SK-N-SH (cell line): ENCODE measurements at regions of chr3 and their contacts with region 1.

Region 1: DNA sequence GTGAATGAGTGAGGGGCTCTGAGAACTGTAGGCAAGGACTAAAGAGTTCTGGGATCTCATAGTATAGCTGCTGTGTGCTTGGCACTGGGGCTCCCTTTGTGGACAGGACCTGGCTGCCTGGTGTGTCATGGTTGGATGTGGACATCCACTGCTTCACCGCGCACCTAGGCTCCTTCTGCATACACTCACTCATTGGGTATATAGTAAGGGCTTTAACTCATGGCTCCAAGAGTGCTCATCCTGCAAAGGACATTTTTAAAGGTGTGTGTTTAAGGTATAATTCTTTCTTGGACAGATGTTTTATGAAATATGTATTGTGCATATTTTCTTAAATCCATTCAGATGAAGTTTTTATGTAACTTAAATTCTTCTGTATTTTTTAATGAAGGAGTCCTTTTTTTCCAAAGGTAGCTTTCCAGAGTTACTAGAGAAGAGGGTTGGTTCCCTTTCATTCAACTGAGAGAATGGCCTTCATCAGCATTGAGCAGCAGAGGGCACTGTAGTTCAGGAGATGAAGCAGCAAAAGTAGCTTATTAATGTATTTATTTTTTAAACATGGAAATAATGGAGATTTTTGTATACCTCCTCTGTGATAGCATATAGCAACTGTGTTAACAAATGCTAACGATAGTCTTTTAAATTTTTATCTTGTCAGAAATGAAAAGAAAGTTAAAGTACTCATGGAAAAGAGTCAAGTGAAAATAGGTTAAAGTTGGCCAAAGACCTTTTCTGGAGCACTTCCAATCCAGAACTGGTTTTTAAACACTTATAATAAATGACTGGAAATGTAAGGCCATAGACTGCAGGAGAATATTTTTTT is 25.2 kb downstream of the OXNAD1 start:
- DNase-seq: peak; percentile 30
- H3K4me3 ChIP-seq: peak overlapping the region in 1 of 2 experiments; percentile 33; a peak in 1 of 4 replicates
- H3K27ac ChIP-seq: peak overlapping the region in 1 of 2 experiments; percentile 76; a peak in 2 of 4 replicates
- H3K4me1 ChIP-seq: peaks cover 0 to 11% of the 10 kb centered on the region in 2 experiments; a peak in 2 of 4 replicates
- H3K27me3 ChIP-seq: no peaks in the 10 kb centered on the region
- CTCF ChIP-seq: peak; percentile 96
- EP300 ChIP-seq: no peak
- RAD21 ChIP-seq: peak; percentile 97

Region 2: GRCh38 chr3:16264708-16265454 is 25.3 kb before region 1 on chr3 and contains the starts of genes DPH3 and OXNAD1:
- CTCF ChIA-PET with region 1: interaction called, 27 read pairs
- POLR2A ChIA-PET with region 1: interaction called, 3 read pairs
- DNase-seq: peak; percentile 93
- H3K4me3 ChIP-seq: peak within 1 kb of the TSS; percentile 83 to 86
- H3K27ac ChIP-seq: peak within 1 kb of the TSS; percentile 83 to 86
- H3K4me1 ChIP-seq: peaks cover 5 to 17% of the 10 kb centered on the region in 2 experiments
- H3K27me3 ChIP-seq: no peaks in the 10 kb centered on the region
- CTCF ChIP-seq: no peak
- EP300 ChIP-seq: no peak
- RAD21 ChIP-seq: no peak
- polyA plus RNA-seq, gene DPH3: 8.5 and 10.8 TPM in 2 replicates
- polyA plus RNA-seq, gene OXNAD1: 6.9 and 10.0 TPM in 2 replicates

Region 3: GRCh38 chr3:16305111-16305541 is 14.9 kb after region 1 on chr3:
- CTCF ChIA-PET with region 1: interaction called, 33 read pairs
- POLR2A ChIA-PET with region 1: no interaction called
- DNase-seq: no peak
- H3K4me3 ChIP-seq: no peak overlapping the region
- H3K27ac ChIP-seq: peak overlapping the region in 1 of 2 experiments; percentile 28; a peak in 1 of 4 replicates
- H3K4me1 ChIP-seq: peaks cover 0 to 9% of the 10 kb centered on the region in 2 experiments; a peak in 1 of 4 replicates
- H3K27me3 ChIP-seq: no peaks in the 10 kb centered on the region
- CTCF ChIP-seq: no peak
- EP300 ChIP-seq: no peak
- RAD21 ChIP-seq: no peak

Region 4: GRCh38 chr3:16489326-16490277 is 199.4 kb after region 1 on chr3:
- CTCF ChIA-PET with region 1: interaction called, 11 read pairs
- POLR2A ChIA-PET with region 1: no interaction called
- DNase-seq: peak; percentile 33
- H3K4me3 ChIP-seq: no peak overlapping the region
- H3K27ac ChIP-seq: peak overlapping the region in 1 of 2 experiments; percentile 78; a peak in 2 of 4 replicates
- H3K4me1 ChIP-seq: peaks cover 4 to 28% of the 10 kb centered on the region in 2 experiments; a peak in 3 of 4 replicates
- H3K27me3 ChIP-seq: no peaks in the 10 kb centered on the region
- CTCF ChIP-seq: no peak
- EP300 ChIP-seq: peak in 1 of 2 experiments; percentile 63; a peak in 1 of 4 replicates
- RAD21 ChIP-seq: no peak; the same call in 1 of the 2 replicates

Region 5: GRCh38 chr3:16511681-16512434 is 221.6 kb after region 1 on chr3:
- CTCF ChIA-PET with region 1: interaction called, 57 read pairs
- POLR2A ChIA-PET with region 1: interaction called, 16 read pairs
- DNase-seq: no peak
- H3K4me3 ChIP-seq: peak overlapping the region; percentile 86 to 96
- H3K27ac ChIP-seq: peak overlapping the region; percentile 67 to 100
- H3K4me1 ChIP-seq: peaks cover 9 to 58% of the 10 kb centered on the region in 2 experiments; a peak in 3 of 4 replicates
- H3K27me3 ChIP-seq: no peaks in the 10 kb centered on the region
- CTCF ChIP-seq: peak; percentile 12; the same call in 1 of the 2 replicates
- EP300 ChIP-seq: no peak
- RAD21 ChIP-seq: no peak; the same call in 1 of the 2 replicates

Region 6: GRCh38 chr3:16529264-16529663 is 239.0 kb after region 1 on chr3:
- CTCF ChIA-PET with region 1: interaction called, 19 read pairs
- POLR2A ChIA-PET with region 1: no interaction called
- DNase-seq: no peak
- H3K4me3 ChIP-seq: no peak overlapping the region
- H3K27ac ChIP-seq: no peak overlapping the region
- H3K4me1 ChIP-seq: peaks cover 0 to 6% of the 10 kb centered on the region in 2 experiments; a peak in 2 of 4 replicates
- H3K27me3 ChIP-seq: no peaks in the 10 kb centered on the region; the same call in 1 of the 2 replicates
- CTCF ChIP-seq: peak; percentile 20
- EP300 ChIP-seq: no peak
- RAD21 ChIP-seq: no peak

Region 7: GRCh38 chr3:16550676-16551341 is 260.6 kb after region 1 on chr3:
- CTCF ChIA-PET with region 1: interaction called, 88 read pairs
- POLR2A ChIA-PET with region 1: interaction called, 3 read pairs
- DNase-seq: peak; percentile 73
- H3K4me3 ChIP-seq: peak overlapping the region in 1 of 2 experiments; percentile 18; a peak in 1 of 4 replicates
- H3K27ac ChIP-seq: peak overlapping the region in 1 of 2 experiments; percentile 90; a peak in 2 of 4 replicates
- H3K4me1 ChIP-seq: peaks cover 0 to 7% of the 10 kb centered on the region in 2 experiments; a peak in 2 of 4 replicates
- H3K27me3 ChIP-seq: no peaks in the 10 kb centered on the region
- CTCF ChIP-seq: peak; percentile 85
- EP300 ChIP-seq: 0 out of 4 replicates have a peak, but pooled peaks of 1 of the 2 experiments have one; percentile 5
- RAD21 ChIP-seq: peak; percentile 98